HepG2 (cell line): ENCODE measurements at regions of chr12 and their contacts with region 1.

Region 1: DNA sequence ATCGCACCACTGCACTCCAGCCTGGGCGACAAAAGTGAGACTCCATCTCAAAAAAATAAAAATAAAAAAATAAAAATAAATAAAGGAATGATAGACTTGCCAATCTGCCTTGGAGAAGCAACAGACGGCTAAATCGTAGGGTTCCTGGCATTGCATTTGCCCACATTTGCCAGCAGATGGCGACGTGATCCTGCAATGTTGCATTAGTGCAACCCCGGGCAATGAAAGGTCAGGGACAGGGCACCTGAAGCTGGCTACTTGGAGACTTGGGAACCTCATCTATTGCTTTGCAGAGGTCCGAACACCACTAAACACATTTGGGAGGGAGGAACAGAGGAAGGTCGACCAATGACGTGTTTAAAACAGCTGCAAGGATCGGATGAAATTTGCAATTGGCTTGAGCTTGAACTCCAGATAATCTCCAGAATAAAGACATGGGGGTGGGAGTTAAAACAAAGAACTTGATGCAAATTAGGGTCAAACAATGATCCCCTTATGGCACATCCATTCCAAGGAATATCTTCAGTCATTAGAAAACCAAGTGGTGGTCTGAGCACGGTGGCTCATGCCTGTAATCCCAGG is 34.6 kb downstream of the SPRING1 start:
- DNase-seq: peak; percentile 62
- ATAC-seq: peak; percentile 76
- H3K4me3 ChIP-seq: no peak overlapping the region
- H3K27ac ChIP-seq: no peak overlapping the region
- H3K4me1 ChIP-seq: peaks cover 7% of the 10 kb centered on the region; the same call in 1 of the 2 replicates
- H3K27me3 ChIP-seq: no peaks in the 10 kb centered on the region
- CTCF ChIP-seq: peak; percentile 92
- EP300 ChIP-seq: no peak
- POLR2A ChIP-seq: no peak
- RAD21 ChIP-seq: peak; percentile 86

Region 2: DNA sequence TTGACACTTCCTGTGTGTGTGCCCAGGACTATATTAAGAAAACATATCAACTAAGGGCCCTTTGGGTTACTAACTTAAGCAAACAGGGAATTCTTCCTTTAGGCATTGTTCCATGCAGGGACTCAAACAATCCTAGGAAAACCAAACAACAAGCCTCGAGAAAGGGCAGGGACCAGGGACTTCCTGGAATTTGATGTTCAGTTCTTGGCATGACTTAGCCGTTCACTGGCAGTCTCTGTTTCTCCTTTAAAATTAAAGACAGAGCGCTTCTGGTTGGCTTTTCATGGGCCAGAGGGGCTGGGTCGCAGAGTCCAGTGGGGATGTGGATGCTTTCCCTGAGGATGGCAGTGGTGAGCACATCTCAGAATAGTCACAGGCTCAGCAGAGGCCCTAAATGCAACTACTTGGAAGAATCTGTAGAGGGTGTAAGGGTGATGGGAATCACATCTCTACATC is 70.0 kb after region 1 on chr12:
- CTCF ChIA-PET with region 1: no interaction called
- POLR2A ChIA-PET with region 1: no interaction called
- in situ Hi-C with region 1: no loop called
- intact Hi-C with region 1: no loop called
- DNase-seq: peak; percentile 9
- ATAC-seq: peak; percentile 70
- H3K4me3 ChIP-seq: no peak overlapping the region
- H3K27ac ChIP-seq: no peak overlapping the region
- H3K4me1 ChIP-seq: no peaks in the 10 kb centered on the region
- H3K27me3 ChIP-seq: no peaks in the 10 kb centered on the region
- CTCF ChIP-seq: no peak; the same call in 1 of the 2 replicates
- EP300 ChIP-seq: no peak
- POLR2A ChIP-seq: no peak
- RAD21 ChIP-seq: no peak

Region 3: GRCh38 chr12:116880817-116881324 is 177.6 kb after region 1 on chr12:
- CTCF ChIA-PET with region 1: interaction called, 5 read pairs
- POLR2A ChIA-PET with region 1: no interaction called
- in situ Hi-C with region 1: loop called (anchors 5 kb)
- intact Hi-C with region 1: loop called (anchors 2 kb)
- DNase-seq: peak; percentile 27
- ATAC-seq: peak; percentile 93
- H3K4me3 ChIP-seq: peak overlapping the region; percentile 21 to 64 (median 36); a peak in 5 of 6 replicates
- H3K27ac ChIP-seq: no peak overlapping the region
- H3K4me1 ChIP-seq: peaks cover 30% of the 10 kb centered on the region
- H3K27me3 ChIP-seq: peaks cover 18 to 79% of the 10 kb centered on the region in 2 experiments
- CTCF ChIP-seq: peak; percentile 23; the same call in 1 of the 2 replicates
- EP300 ChIP-seq: no peak
- POLR2A ChIP-seq: no peak
- RAD21 ChIP-seq: peak; percentile 61

Region 4: GRCh38 chr12:116910645-116911451 is 207.5 kb after region 1 on chr12 and contains the start of gene FBXW8:
- CTCF ChIA-PET with region 1: no interaction called
- POLR2A ChIA-PET with region 1: no interaction called
- in situ Hi-C with region 1: loop called (anchors 10 kb)
- intact Hi-C with region 1: no loop called
- DNase-seq: peak; percentile 61
- ATAC-seq: peak; percentile 90
- H3K4me3 ChIP-seq: peak within 1 kb of the TSS; percentile 66 to 88 (median 78)
- H3K27ac ChIP-seq: peak within 1 kb of the TSS; percentile 79
- H3K4me1 ChIP-seq: peaks cover 32% of the 10 kb centered on the region
- H3K27me3 ChIP-seq: no peaks in the 10 kb centered on the region
- CTCF ChIP-seq: no peak
- EP300 ChIP-seq: no peak
- POLR2A ChIP-seq: peak; percentile 79
- RAD21 ChIP-seq: peak; percentile 68; the same call in 1 of the 2 replicates
- total RNA-seq, gene FBXW8: 5.9 and 6.4 TPM in 2 replicates

Region 5: GRCh38 chr12:117025481-117026151 is 322.3 kb after region 1 on chr12:
- CTCF ChIA-PET with region 1: interaction called, 3 read pairs
- POLR2A ChIA-PET with region 1: no interaction called
- in situ Hi-C with region 1: no loop called
- intact Hi-C with region 1: loop called (anchors 10 kb)
- DNase-seq: peak; percentile 68
- ATAC-seq: peak; percentile 84
- H3K4me3 ChIP-seq: no peak overlapping the region
- H3K27ac ChIP-seq: no peak overlapping the region
- H3K4me1 ChIP-seq: peaks cover 7% of the 10 kb centered on the region; the same call in 1 of the 2 replicates
- H3K27me3 ChIP-seq: no peaks in the 10 kb centered on the region
- CTCF ChIP-seq: peak; percentile 91
- EP300 ChIP-seq: no peak
- POLR2A ChIP-seq: no peak
- RAD21 ChIP-seq: peak; percentile 92